ENCODE measurements at regions of chr2 and their contacts with region 1.

Region 1: GRCh38 chr2:215435809-215436704 is at the start of gene FN1:
- DNase-seq: peak; percentile 99
- H3K4me3 ChIP-seq: peak within 1 kb of the TSS; percentile 77 to 100 (median 99)
- H3K27ac ChIP-seq: peak within 1 kb of the TSS; percentile 100
- H3K4me1 ChIP-seq: peaks cover 44% of the 10 kb centered on the region
- H3K27me3 ChIP-seq: no peaks in the 10 kb centered on the region
- CTCF ChIP-seq: no peak
- POLR2A ChIP-seq: peak; percentile 98
- total RNA-seq, gene FN1: 3,221 and 3,760 TPM in 2 replicates

Region 2: DNA sequence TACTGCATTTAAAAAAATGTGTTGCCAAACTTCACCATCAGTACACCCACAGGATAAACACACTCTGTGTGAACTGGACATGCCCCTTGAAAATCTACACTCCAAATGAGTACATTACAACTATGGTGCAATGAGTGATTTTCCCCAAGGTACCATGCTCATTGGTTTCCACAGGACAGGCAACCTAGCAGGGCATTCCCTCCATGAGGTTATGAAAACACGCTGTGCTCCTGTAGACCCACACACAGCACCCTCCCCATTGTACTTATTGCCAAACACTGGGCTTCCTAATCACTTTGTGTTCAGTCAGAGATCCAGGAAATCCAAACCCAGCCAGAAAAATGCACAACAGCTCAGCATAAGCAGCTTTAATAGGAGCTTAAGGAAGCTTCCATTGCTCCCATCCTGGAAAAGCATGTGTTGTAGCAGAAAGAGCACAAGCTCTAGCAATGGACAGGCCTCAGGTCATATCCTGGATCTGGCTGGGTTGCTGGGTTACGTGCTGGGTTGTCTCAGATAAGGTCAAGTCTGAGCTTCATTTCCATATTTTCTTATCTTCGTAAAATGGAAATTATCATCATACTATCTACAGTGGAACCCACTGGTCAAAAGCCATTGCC is 145.0 kb before region 1 on chr2:
- CTCF ChIA-PET with region 1: no interaction called
- POLR2A ChIA-PET with region 1: no interaction called
- dilution Hi-C with region 1: no loop called
- intact Hi-C with region 1: no loop called
- DNase-seq: no peak
- H3K4me3 ChIP-seq: no peak overlapping the region
- H3K27ac ChIP-seq: no peak overlapping the region
- H3K4me1 ChIP-seq: no peaks in the 10 kb centered on the region
- H3K27me3 ChIP-seq: peaks cover 2% of the 10 kb centered on the region in 2 experiments
- CTCF ChIP-seq: no peak
- POLR2A ChIP-seq: no peak

Region 3: DNA sequence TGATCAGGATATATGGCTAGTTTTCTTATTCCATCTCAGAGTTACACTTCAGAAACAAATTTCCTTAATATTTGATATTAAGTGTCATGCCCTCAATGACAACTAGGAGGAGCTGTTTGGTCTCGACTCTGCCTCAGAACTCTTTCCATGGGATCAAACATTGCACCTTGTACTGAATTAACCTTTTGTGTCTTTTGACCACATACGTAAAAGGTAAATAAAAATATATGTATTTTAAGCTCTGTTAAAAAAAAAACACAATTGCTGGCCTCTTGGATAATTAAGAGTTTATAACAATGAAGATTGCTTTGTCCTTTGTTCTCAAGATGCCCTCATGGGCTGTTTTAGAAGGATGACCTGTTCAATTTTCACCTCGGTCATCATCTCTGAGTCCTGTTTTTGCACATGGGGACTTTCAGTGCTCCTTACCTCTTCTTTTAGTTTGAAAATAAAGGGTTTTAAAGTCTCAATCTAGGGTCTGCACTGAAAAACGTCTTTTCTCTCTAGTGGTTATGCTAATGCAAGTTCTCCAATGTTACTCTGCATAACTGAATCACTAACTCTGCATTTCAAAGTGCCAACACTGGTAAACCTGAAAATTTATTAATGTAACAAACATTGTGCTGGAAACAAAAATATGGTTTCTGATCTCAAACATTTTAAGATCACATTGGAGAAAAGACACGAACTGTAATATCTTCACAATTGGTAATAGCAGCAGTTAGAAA is 18.6 kb after region 1 on chr2:
- CTCF ChIA-PET with region 1: interaction called, 11 read pairs
- POLR2A ChIA-PET with region 1: no interaction called
- dilution Hi-C with region 1: no loop called
- intact Hi-C with region 1: no loop called
- DNase-seq: peak; percentile 73
- H3K4me3 ChIP-seq: no peak overlapping the region
- H3K27ac ChIP-seq: no peak overlapping the region
- H3K4me1 ChIP-seq: peaks cover 2% of the 10 kb centered on the region
- H3K27me3 ChIP-seq: no peaks in the 10 kb centered on the region
- CTCF ChIP-seq: peak; percentile 69
- POLR2A ChIP-seq: no peak

Region 4: DNA sequence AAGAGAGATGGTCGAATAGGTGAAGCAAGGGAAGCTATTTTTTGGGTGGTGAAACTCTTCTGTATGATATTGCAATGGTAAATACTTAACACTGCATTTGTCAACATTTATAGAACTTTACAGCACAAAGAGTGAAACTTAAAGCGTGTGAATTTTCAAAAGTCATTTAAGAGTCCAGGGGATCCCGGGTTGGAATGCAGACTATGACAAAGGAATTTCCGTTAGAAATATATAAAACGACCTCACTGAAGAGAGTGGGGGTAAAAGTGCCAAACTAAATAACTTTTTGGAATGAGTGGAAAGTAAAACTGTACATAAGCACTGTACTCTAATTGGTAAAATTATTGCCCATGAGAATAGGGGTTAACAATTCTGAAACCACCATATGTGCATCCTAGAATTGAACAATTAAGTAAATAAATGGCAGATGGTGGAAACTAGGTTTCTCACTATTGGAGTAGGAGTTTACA is 190.8 kb after region 1 on chr2:
- CTCF ChIA-PET with region 1: no interaction called
- POLR2A ChIA-PET with region 1: no interaction called
- dilution Hi-C with region 1: no loop called
- intact Hi-C with region 1: loop called (anchors 1 kb)
- DNase-seq: peak; percentile 79
- H3K4me3 ChIP-seq: peak overlapping the region in 1 of 3 experiments; percentile 27
- H3K27ac ChIP-seq: peak overlapping the region; percentile 91
- H3K4me1 ChIP-seq: peaks cover 33% of the 10 kb centered on the region
- H3K27me3 ChIP-seq: no peaks in the 10 kb centered on the region
- CTCF ChIP-seq: no peak
- POLR2A ChIP-seq: no peak

Region 5: DNA sequence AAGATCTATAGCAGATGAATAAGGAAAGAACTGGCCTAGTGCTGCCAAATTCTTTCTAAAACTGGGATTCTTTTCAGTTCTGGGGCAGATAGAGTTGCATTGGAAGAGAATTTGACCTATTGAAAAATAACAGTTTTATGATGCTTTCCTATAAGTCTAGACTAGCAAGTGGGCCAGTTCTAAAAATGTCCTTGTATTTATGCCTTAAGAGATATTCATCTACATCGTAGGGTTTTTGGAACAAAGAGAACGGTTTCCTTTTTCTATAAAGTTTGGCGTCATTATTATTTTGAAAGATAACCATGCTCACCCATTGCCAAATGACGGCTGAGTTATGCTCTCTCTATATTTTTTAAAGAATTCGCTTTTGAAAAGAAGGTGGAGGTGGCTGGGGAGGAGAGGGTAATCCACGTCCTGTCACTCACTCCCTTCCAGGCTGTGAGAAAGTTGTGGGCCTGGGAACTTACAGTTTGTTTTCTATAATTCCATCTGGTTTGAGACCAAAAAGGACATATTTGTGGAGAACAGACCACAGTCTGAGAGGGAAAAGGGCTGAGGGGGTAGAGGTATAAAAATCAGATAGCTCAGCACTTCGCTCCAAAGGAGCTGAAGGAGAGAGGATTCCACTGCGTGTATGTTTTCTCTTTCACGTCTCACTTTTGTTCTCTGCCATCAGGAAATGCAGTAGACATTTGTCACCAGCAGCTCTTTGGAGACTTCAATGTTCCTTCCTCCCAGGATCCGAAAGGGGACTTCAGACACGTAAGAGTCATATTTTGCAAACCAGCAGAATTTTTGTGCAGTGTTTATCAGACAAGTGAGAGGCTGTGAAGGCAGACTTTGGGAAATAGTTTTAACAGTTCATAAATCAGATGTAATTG is 281.7 kb after region 1 on chr2:
- CTCF ChIA-PET with region 1: no interaction called
- POLR2A ChIA-PET with region 1: no interaction called
- dilution Hi-C with region 1: no loop called
- intact Hi-C with region 1: loop called (anchors 1 kb)
- DNase-seq: peak; percentile 88
- H3K4me3 ChIP-seq: peak overlapping the region in 1 of 3 experiments; percentile 28
- H3K27ac ChIP-seq: peak overlapping the region; percentile 92
- H3K4me1 ChIP-seq: peaks cover 45% of the 10 kb centered on the region
- H3K27me3 ChIP-seq: no peaks in the 10 kb centered on the region
- CTCF ChIP-seq: no peak
- POLR2A ChIP-seq: no peak

Region 6: GRCh38 chr2:215828517-215829184 is 392.6 kb after region 1 on chr2:
- CTCF ChIA-PET with region 1: interaction called, 6 read pairs
- POLR2A ChIA-PET with region 1: no interaction called
- dilution Hi-C with region 1: no loop called
- intact Hi-C with region 1: loop called (anchors 1 kb)
- DNase-seq: peak; percentile 52
- H3K4me3 ChIP-seq: no peak overlapping the region
- H3K27ac ChIP-seq: no peak overlapping the region
- H3K4me1 ChIP-seq: peaks cover 47% of the 10 kb centered on the region
- H3K27me3 ChIP-seq: no peaks in the 10 kb centered on the region
- CTCF ChIP-seq: peak; percentile 49 to 62
- POLR2A ChIP-seq: no peak

Measured in endothelial cell of umbilical vein (primary cell).